ENCODE measurements at regions of chr13 and their contacts with region 1.

Region 1: GRCh38 chr13:27251166-27252091 is at the start of gene RPL21:
- DNase-seq: peak; percentile 95 to 96
- ATAC-seq: peak; percentile 99
- H3K4me3 ChIP-seq: peak within 1 kb of the TSS; percentile 83 to 99 (median 88)
- H3K27ac ChIP-seq: peak within 1 kb of the TSS; percentile 90 to 99 (median 93)
- H3K4me1 ChIP-seq: peaks cover 28 to 38% of the 10 kb centered on the region in 2 donors
- H3K27me3 ChIP-seq: no peaks in the 10 kb centered on the region
- CTCF ChIP-seq: peak in 2 of 5 experiments; percentile 12 to 20
- POLR2A ChIP-seq: peak; percentile 89 to 92
- total RNA-seq, gene RPL21: 774 to 913 (median 796) TPM

Region 2: GRCh38 chr13:27130979-27131623 is 120.3 kb before region 1 on chr13:
- in situ Hi-C with region 1: no loop called
- intact Hi-C with region 1: no loop called
- DNase-seq: peak in 1 of 2 donors; percentile 56
- ATAC-seq: peak; percentile 69 to 79
- H3K4me3 ChIP-seq: peak overlapping the region in 1 of 4 donors; percentile 32
- H3K27ac ChIP-seq: peak overlapping the region; percentile 55 to 74 (median 66)
- H3K4me1 ChIP-seq: peaks cover 39 to 79% of the 10 kb centered on the region in 2 donors
- H3K27me3 ChIP-seq: no peaks in the 10 kb centered on the region
- CTCF ChIP-seq: no peak
- POLR2A ChIP-seq: no peak

Region 3: GRCh38 chr13:27270594-27271520 is 19.4 kb after region 1 on chr13 and contains the start of gene RASL11A:
- in situ Hi-C with region 1: no loop called
- intact Hi-C with region 1: loop called (anchors 2 kb)
- DNase-seq: peak; percentile 57 to 71
- ATAC-seq: peak; percentile 86 to 90
- H3K4me3 ChIP-seq: peak within 1 kb of the TSS; percentile 65 to 91 (median 74)
- H3K27ac ChIP-seq: peak within 1 kb of the TSS; percentile 75 to 86 (median 84)
- H3K4me1 ChIP-seq: peaks cover 4 to 6% of the 10 kb centered on the region in 2 donors
- H3K27me3 ChIP-seq: no peaks in the 10 kb centered on the region
- CTCF ChIP-seq: peak; percentile 84 to 96 (median 87)
- POLR2A ChIP-seq: peak; percentile 61 to 87
- total RNA-seq, gene RASL11A: 2.8 to 9.0 (median 5.7) TPM

Region 4: DNA sequence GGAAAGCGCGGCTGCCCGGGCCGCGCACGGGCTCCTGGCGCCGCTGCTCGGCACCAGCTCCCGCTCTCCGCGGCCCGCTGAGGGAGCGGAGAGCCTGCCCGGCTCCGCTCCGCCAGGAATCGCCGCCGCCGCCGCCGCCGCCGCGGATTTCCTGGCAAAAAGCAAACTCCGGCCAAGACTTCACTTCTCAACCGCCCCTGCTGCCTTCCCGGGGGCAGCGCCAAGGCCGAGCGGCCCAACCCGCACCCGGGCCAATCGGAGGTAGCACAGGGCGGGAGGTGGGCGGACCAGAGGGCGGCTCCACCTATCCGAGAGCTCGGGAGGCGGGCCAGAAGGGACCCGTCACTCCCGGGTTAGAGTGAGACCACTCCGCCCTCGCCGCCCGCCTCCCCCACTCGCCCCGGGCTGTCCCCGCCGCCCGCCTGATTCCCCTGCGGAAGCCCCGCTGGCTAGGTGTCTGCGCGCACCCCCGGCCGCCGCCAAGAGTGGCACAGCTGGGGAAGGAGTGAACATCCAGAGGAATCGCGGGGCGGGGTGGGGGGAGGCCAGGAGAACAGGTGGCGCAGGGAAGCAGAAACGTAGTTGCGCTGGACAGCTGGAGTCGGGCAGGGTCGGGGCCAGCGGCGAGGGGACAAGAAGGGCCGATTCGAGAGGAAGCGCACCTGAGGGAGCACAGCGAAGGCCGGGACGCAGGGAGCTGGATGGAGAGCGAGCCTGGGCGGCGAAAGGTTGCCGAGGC is 369.1 kb after region 1 on chr13 and contains the start of gene LNX2:
- in situ Hi-C with region 1: loop called in 3 of 4 experiments (anchors 25 kb)
- intact Hi-C with region 1: loop called (anchors 2 kb)
- DNase-seq: peak; percentile 98 to 99
- ATAC-seq: peak; percentile 72 to 73
- H3K4me3 ChIP-seq: peak within 1 kb of the TSS; percentile 69 to 98 (median 90)
- H3K27ac ChIP-seq: peak within 1 kb of the TSS; percentile 95 to 100 (median 99)
- H3K4me1 ChIP-seq: peaks cover 30 to 44% of the 10 kb centered on the region in 2 donors
- H3K27me3 ChIP-seq: no peaks in the 10 kb centered on the region
- CTCF ChIP-seq: peak in 2 of 5 experiments; percentile 24 to 29
- POLR2A ChIP-seq: peak; percentile 92 to 94
- total RNA-seq, gene LNX2: 5.0 to 7.1 (median 6.2) TPM

Region 5: DNA sequence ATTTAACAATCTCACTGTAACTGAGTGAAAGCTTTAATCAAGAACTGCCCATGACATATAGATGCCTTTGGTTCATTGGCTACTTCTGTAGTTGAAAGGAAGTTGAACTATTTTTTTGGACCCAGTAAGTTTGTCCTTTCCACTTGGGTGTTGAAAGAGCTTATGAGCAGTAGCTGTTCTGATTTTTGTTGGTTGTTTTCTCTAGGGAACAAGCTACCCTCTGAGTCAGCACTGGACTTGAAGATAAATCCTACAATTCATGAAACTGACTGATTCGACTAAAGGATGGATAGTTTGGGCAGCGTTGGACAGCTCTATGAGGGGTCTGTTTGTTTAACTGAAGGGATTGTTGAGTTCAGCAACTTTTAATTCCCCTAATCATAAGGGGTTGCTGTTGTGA is 987.9 kb after region 1 on chr13:
- in situ Hi-C with region 1: no loop called
- intact Hi-C with region 1: loop called (anchors 5 kb)
- DNase-seq: no peak
- ATAC-seq: no peak
- H3K4me3 ChIP-seq: no peak overlapping the region
- H3K27ac ChIP-seq: no peak overlapping the region
- H3K4me1 ChIP-seq: no peaks in the 10 kb centered on the region
- H3K27me3 ChIP-seq: no peaks in the 10 kb centered on the region
- CTCF ChIP-seq: no peak
- POLR2A ChIP-seq: no peak

Region 6: GRCh38 chr13:28658796-28659620 is 1407.6 kb after region 1 on chr13 and contains the start of gene POMP:
- in situ Hi-C with region 1: no loop called
- intact Hi-C with region 1: loop called (anchors 10 kb)
- DNase-seq: peak; percentile 86 to 90
- ATAC-seq: peak; percentile 95 to 97
- H3K4me3 ChIP-seq: peak within 1 kb of the TSS; percentile 77 to 92 (median 86)
- H3K27ac ChIP-seq: peak within 1 kb of the TSS; percentile 93 to 95 (median 95)
- H3K4me1 ChIP-seq: peaks cover 39 to 42% of the 10 kb centered on the region in 2 donors
- H3K27me3 ChIP-seq: no peaks in the 10 kb centered on the region
- CTCF ChIP-seq: peak in 1 of 5 experiments; percentile 14
- POLR2A ChIP-seq: peak; percentile 97 to 99
- total RNA-seq, gene POMP: 162 to 188 (median 176) TPM